ENCODE measurements at regions of chr11 and their contacts with region 1.

Region 1: DNA sequence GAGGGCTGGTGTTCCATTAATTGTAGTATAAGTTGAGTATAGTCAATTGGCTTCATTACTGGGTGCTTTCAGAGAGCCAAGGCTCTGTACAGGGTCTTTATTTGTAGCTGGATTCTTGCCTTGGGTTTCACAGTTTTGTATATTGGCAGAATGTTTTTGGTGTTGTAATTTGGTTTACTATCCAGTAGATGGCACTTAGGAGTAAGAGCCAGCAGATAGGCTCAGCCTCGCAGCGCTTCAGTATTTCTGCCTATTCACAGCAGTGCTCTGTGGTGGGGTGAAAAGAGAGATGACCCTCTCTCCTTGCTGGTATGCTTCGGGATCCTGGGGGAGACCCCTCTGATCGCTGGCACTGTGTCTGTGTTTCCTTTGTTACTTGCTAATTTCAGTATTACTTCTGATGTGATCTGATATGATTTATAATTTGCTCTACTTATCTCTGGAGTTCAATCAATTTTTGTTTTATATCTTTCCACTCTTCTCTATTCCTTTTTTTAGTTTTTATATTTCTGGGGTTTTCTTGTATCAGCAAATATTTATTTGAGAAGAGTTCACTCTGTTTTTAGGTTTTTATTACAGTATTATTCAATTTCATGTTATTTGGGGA is 52.2 kb downstream of the ANO5 start:
- DNase-seq: peak; percentile 5
- CTCF ChIP-seq: peak; percentile 46

Region 2: DNA sequence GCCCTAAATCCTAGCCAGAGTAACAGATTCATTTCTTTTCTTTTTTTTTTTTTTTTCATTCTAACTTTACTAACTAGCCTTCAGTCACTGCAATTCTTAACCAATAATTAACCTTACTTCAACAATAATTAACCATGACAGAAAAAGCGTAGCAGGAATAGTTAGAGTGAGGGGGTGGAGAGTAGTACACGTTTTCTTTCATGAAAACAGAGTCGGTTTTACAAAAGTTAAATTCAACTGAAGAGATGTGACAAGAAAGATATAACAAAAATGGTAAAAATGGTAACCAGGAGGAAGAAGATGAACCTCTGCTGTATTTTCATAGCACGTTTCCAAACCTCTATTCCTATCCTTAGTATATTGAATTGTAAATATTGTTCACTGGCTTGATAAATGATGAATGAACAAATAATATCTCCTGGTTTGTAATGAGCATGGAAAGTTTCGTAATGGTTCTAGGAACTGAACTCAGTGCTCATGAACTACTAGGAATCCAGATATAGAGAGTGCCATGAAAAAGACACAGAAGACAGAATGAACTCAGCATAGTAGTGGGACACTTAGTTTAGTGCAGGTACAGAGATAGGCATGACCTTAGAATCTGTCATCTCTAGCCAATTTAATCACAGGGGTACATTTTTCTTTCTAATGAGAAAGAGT is 168.7 kb before region 1 on chr11:
- CTCF ChIA-PET with region 1: no interaction called
- POLR2A ChIA-PET with region 1: no interaction called
- DNase-seq: no peak
- CTCF ChIP-seq: no peak

Region 3: DNA sequence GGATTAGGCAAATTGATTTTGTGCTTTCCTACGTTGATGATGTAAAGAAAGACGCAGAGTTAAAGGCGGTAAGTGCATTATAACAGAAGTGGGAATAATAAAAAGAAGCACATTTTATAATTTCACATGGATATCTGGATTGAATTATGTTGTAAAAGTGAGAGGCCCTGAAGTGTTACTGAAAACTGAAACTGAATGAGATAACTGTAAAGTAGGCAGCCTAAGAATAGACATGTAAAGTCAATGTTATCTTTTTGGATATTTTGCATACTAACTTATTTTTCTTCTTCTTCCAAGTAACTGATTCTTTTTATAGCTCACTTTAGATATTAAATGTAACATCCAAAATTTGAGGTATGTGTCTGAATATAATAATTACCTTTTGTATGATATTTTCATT is 23.9 kb before region 1 on chr11:
- CTCF ChIA-PET with region 1: interaction called, 23 read pairs
- POLR2A ChIA-PET with region 1: no interaction called
- DNase-seq: no peak
- CTCF ChIP-seq: no peak

Region 4: GRCh38 chr11:22234743-22235142 is 10.3 kb before region 1 on chr11:
- CTCF ChIA-PET with region 1: interaction called, 18 read pairs
- POLR2A ChIA-PET with region 1: no interaction called
- DNase-seq: no peak
- CTCF ChIP-seq: no peak

Region 5: GRCh38 chr11:22304337-22304961 is 59.4 kb after region 1 on chr11:
- CTCF ChIA-PET with region 1: interaction called, 52 read pairs
- POLR2A ChIA-PET with region 1: no interaction called
- DNase-seq: peak; percentile 20
- CTCF ChIP-seq: peak; percentile 54

Measured in GM10248 (cell line).